ENCODE measurements at regions of chr15 and their contacts with region 1.

Region 1: GRCh38 chr15:79596051-79596507 is 163.9 kb downstream of the MINAR1 start:
- DNase-seq: peak; percentile 79
- H3K4me3 Mint-ChIP-seq: no peak overlapping the region
- H3K27ac Mint-ChIP-seq: no peak overlapping the region
- H3K4me1 Mint-ChIP-seq: no peaks in the 10 kb centered on the region
- H3K27me3 Mint-ChIP-seq: peaks cover 68% of the 10 kb centered on the region
- CTCF ChIP-seq: peak; percentile 90

Region 2: GRCh38 chr15:79339564-79340314 is 256.3 kb before region 1 on chr15:
- CTCF ChIA-PET with region 1: interaction called, 13 read pairs
- intact Hi-C with region 1: loop called (anchors 2 kb)
- DNase-seq: no peak
- H3K4me3 Mint-ChIP-seq: no peak overlapping the region
- H3K27ac Mint-ChIP-seq: no peak overlapping the region
- H3K4me1 Mint-ChIP-seq: peaks cover 13% of the 10 kb centered on the region
- H3K27me3 Mint-ChIP-seq: no peaks in the 10 kb centered on the region
- CTCF ChIP-seq: peak; percentile 78